HEK293 (cell line): ENCODE measurements at regions of chr16 and their contacts with region 1.

Region 1: DNA sequence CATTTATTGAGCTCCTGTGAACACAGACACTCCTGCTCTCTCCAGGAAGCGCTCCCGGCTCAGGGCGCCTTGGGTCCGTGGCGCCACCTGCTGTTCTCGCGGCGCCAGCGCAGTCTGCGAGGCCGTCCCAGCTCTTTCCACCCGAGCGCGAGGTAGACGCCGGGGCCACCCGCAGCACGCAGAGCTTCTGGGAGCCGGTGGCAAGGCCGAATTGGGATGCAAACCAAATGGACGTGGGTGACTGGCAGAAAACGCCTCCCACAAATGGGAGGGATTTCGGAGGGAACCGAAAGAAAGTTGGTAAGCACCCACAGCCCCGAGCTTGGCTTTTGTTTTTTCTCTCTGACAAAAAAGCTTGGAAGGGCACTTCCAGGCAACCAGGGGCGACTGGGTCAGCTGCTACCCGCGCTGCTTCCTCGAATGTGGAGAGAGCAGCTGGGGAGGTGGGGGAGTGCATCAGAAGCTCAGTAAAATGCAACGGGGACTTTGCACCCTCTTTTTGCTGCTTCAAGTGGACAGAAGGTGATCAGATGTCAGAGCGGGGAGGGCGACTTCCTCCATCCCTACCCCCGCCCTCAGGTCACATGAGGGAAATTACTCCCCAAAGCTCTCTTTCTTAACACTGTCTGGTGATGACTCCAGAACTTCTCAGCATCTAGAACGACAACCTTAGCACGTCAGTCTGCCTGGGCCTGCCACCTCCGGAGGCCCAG is 13.5 kb upstream of the N4BP1 start:
- H3K4me3 ChIP-seq: peak overlapping the region; percentile 25
- H3K27ac ChIP-seq: no peak overlapping the region
- H3K4me1 ChIP-seq: no peaks in the 10 kb centered on the region
- CTCF ChIP-seq: peak; percentile 95

Region 2: GRCh38 chr16:48353565-48354163 is 269.8 kb before region 1 on chr16:
- CTCF ChIA-PET with region 1: interaction called, 29 read pairs
- POLR2A ChIA-PET with region 1: interaction called, 5 read pairs
- H3K4me3 ChIP-seq: no peak overlapping the region
- H3K27ac ChIP-seq: no peak overlapping the region
- H3K4me1 ChIP-seq: no peaks in the 10 kb centered on the region
- CTCF ChIP-seq: peak; percentile 91

Region 3: GRCh38 chr16:48491517-48491916 is 131.9 kb before region 1 on chr16:
- CTCF ChIA-PET with region 1: no interaction called
- POLR2A ChIA-PET with region 1: no interaction called
- H3K4me3 ChIP-seq: no peak overlapping the region
- H3K27ac ChIP-seq: no peak overlapping the region
- H3K4me1 ChIP-seq: no peaks in the 10 kb centered on the region
- CTCF ChIP-seq: no peak

Region 4: DNA sequence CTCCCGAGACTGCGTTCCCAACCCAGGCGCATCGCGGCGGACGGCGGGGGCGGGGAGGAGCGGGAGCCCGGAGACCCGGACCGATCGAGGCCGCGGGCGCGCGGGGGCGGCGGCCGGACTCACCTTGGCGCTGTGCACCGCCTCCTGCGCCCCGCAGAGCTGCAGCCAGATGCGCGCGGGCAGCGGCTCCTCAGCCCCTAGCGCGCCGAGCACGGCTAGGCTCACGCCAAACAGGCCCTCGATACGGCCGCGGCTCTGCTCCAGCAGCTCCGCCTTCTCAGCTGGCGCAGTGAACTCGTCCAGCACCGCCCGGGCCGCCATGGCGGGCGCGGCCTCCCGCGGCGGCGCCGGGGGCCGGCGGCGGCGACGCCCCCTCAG is 13.8 kb before region 1 on chr16:
- CTCF ChIA-PET with region 1: interaction called, 26 read pairs
- POLR2A ChIA-PET with region 1: interaction called, 3 read pairs
- H3K4me3 ChIP-seq: peak overlapping the region; percentile 90
- H3K27ac ChIP-seq: peak overlapping the region; percentile 93
- H3K4me1 ChIP-seq: no peaks in the 10 kb centered on the region; the same call in 1 of the 2 replicates
- CTCF ChIP-seq: no peak